GM12878 (cell line): ENCODE measurements at regions of chr7 and their contacts with region 1.

Region 1: GRCh38 chr7:7566651-7567611 is at the start of gene MIOS:
- DNase-seq: no peak
- ATAC-seq: peak; percentile 74
- H3K4me3 ChIP-seq: peak within 1 kb of the TSS; percentile 89
- H3K27ac ChIP-seq: peak within 1 kb of the TSS; percentile 99
- H3K4me1 ChIP-seq: peaks cover 9% of the 10 kb centered on the region
- H3K27me3 ChIP-seq: no peaks in the 10 kb centered on the region
- CTCF ChIP-seq: no peak
- EP300 ChIP-seq: no peak
- POLR2A ChIP-seq: peak; percentile 89
- RAD21 ChIP-seq: no peak
- polyA plus RNA-seq, gene MIOS: 13.1 to 18.7 TPM

Region 2: GRCh38 chr7:7257899-7258692 is 308.8 kb before region 1 on chr7:
- CTCF ChIA-PET with region 1: no interaction called
- POLR2A ChIA-PET with region 1: no interaction called
- RAD21 ChIA-PET with region 1: interaction called, 3 read pairs
- SMC1A ChIA-PET with region 1: no interaction called
- in situ Hi-C with region 1: no loop called
- intact Hi-C with region 1: loop called (anchors 5 kb)
- DNase-seq: peak; percentile 86
- ATAC-seq: peak; percentile 96
- H3K4me3 ChIP-seq: peak overlapping the region; percentile 47; the same call in 1 of the 2 replicates
- H3K27ac ChIP-seq: peak overlapping the region; percentile 59
- H3K4me1 ChIP-seq: peaks cover 20% of the 10 kb centered on the region
- H3K27me3 ChIP-seq: no peaks in the 10 kb centered on the region
- CTCF ChIP-seq: no peak
- EP300 ChIP-seq: peak in 1 of 2 experiments; percentile 69; a peak in 1 of 4 replicates
- POLR2A ChIP-seq: no peak
- RAD21 ChIP-seq: no peak

Region 3: DNA sequence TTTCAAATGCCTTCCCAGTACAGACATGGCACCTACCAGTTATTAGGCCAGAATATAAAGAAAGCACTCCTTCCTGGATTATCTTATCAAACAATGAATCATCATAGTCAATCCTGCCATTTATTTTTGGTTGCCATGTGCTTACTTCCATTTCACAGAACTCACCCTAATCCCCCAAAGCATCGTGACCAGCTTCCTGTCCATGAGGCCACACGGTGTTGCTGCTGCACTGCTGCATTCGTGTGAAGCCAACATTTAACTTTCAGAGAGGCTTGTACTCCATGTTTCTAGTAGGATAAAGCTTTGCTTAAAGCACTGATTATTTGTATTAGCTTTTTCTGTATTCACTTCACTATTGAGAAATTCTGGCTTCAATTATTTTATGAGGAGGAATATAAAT is 45.7 kb before region 1 on chr7:
- CTCF ChIA-PET with region 1: no interaction called
- POLR2A ChIA-PET with region 1: no interaction called
- RAD21 ChIA-PET with region 1: no interaction called
- SMC1A ChIA-PET with region 1: no interaction called
- in situ Hi-C with region 1: no loop called
- intact Hi-C with region 1: no loop called
- DNase-seq: no peak
- ATAC-seq: peak; percentile 47; the same call in 1 of the 3 replicates
- H3K4me3 ChIP-seq: no peak overlapping the region
- H3K27ac ChIP-seq: no peak overlapping the region
- H3K4me1 ChIP-seq: no peaks in the 10 kb centered on the region
- H3K27me3 ChIP-seq: no peaks in the 10 kb centered on the region
- CTCF ChIP-seq: peak in 2 of 3 experiments; percentile 13 to 23; a peak in 2 of 6 replicates
- EP300 ChIP-seq: no peak
- POLR2A ChIP-seq: no peak
- RAD21 ChIP-seq: peak; percentile 42; the same call in 1 of the 2 replicates

Region 4: GRCh38 chr7:7585253-7585928 is 18.5 kb after region 1 on chr7:
- CTCF ChIA-PET with region 1: interaction called, 3 read pairs
- POLR2A ChIA-PET with region 1: no interaction called
- RAD21 ChIA-PET with region 1: interaction called, 6 read pairs
- SMC1A ChIA-PET with region 1: interaction called, 14 read pairs
- in situ Hi-C with region 1: no loop called
- intact Hi-C with region 1: no loop called
- DNase-seq: no peak
- ATAC-seq: no peak
- H3K4me3 ChIP-seq: no peak overlapping the region
- H3K27ac ChIP-seq: no peak overlapping the region
- H3K4me1 ChIP-seq: no peaks in the 10 kb centered on the region
- H3K27me3 ChIP-seq: no peaks in the 10 kb centered on the region
- CTCF ChIP-seq: no peak
- EP300 ChIP-seq: no peak
- POLR2A ChIP-seq: no peak
- RAD21 ChIP-seq: no peak

Region 5: DNA sequence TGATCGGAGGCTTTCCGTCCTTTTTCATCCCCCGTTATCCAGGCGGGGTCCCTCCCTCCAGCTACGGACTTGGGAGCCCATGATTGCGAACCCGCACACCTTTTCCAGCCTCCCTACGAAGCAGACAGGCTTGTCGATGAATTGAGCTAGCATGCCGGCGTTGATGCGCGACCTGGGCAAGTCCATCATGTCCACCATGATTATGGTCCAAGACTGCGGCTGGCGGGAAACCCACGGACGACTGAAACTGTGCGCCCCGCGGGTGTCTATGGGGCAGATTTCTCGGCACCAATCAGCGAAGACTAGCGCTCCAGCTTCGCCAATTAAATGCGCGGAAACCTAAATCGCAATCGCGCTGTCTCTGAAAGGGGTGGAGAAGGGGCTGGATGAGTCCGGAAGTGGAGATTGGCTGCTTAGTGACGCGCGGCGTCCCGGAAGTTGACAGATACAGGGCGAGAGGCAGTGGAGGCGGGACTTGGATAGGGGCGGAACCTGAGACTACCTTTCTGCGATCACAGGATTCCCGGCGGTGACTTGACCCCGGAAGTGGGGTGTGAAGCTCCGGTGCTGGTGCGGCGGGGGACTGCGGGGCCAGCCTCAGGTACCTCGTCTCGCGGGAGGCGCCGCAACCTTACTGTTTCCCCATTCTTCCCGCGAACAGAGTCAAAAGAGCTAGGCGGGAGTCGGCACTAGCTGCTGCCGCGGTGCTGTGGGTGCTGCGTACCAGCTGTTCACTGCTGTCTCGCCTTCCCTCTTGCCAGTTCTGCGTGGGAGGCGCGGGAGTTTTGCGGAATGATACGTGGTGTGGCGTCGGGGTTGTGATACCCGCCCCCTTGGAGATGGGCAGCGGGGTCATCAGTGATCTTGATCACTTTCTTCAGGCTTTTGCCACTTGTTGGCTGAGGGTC is 73.5 kb after region 1 on chr7 and contains the start of gene UMAD1:
- CTCF ChIA-PET with region 1: interaction called, 6 read pairs
- POLR2A ChIA-PET with region 1: interaction called, 15 read pairs
- RAD21 ChIA-PET with region 1: interaction called, 22 read pairs
- SMC1A ChIA-PET with region 1: interaction called, 19 read pairs
- in situ Hi-C with region 1: no loop called
- intact Hi-C with region 1: loop called (anchors 2 kb)
- DNase-seq: peak; percentile 99
- ATAC-seq: peak; percentile 95
- H3K4me3 ChIP-seq: peak within 1 kb of the TSS; percentile 93
- H3K27ac ChIP-seq: peak within 1 kb of the TSS; percentile 79
- H3K4me1 ChIP-seq: no peaks in the 10 kb centered on the region
- H3K27me3 ChIP-seq: no peaks in the 10 kb centered on the region
- CTCF ChIP-seq: no peak
- EP300 ChIP-seq: 0 out of 4 replicates have a peak, but pooled peaks of 1 of the 2 experiments have one; percentile 15
- POLR2A ChIP-seq: peak; percentile 95
- RAD21 ChIP-seq: no peak
- polyA plus RNA-seq, gene UMAD1: 8.7 to 8.8 TPM

Region 6: GRCh38 chr7:7668706-7669105 is 101.8 kb after region 1 on chr7:
- CTCF ChIA-PET with region 1: no interaction called
- POLR2A ChIA-PET with region 1: no interaction called
- RAD21 ChIA-PET with region 1: no interaction called
- SMC1A ChIA-PET with region 1: no interaction called
- in situ Hi-C with region 1: no loop called
- intact Hi-C with region 1: no loop called
- DNase-seq: no peak
- ATAC-seq: no peak
- H3K4me3 ChIP-seq: no peak overlapping the region
- H3K27ac ChIP-seq: no peak overlapping the region
- H3K4me1 ChIP-seq: no peaks in the 10 kb centered on the region
- H3K27me3 ChIP-seq: no peaks in the 10 kb centered on the region
- CTCF ChIP-seq: no peak
- EP300 ChIP-seq: no peak
- POLR2A ChIP-seq: no peak
- RAD21 ChIP-seq: no peak

Region 7: GRCh38 chr7:8115547-8116402 is 548.8 kb after region 1 on chr7:
- CTCF ChIA-PET with region 1: no interaction called
- POLR2A ChIA-PET with region 1: no interaction called
- RAD21 ChIA-PET with region 1: no interaction called
- SMC1A ChIA-PET with region 1: no interaction called
- in situ Hi-C with region 1: no loop called
- intact Hi-C with region 1: loop called (anchors 5 kb)
- DNase-seq: peak; percentile 98
- ATAC-seq: peak; percentile 85
- H3K4me3 ChIP-seq: no peak overlapping the region
- H3K27ac ChIP-seq: peak overlapping the region; percentile 56
- H3K4me1 ChIP-seq: peaks cover 43% of the 10 kb centered on the region
- H3K27me3 ChIP-seq: no peaks in the 10 kb centered on the region
- CTCF ChIP-seq: no peak
- EP300 ChIP-seq: peak; percentile 77 to 93; a peak in 2 of 4 replicates
- POLR2A ChIP-seq: no peak
- RAD21 ChIP-seq: peak; percentile 30; the same call in 1 of the 2 replicates